ENCODE measurements at regions of chr1 and their contacts with region 1.

Region 1: DNA sequence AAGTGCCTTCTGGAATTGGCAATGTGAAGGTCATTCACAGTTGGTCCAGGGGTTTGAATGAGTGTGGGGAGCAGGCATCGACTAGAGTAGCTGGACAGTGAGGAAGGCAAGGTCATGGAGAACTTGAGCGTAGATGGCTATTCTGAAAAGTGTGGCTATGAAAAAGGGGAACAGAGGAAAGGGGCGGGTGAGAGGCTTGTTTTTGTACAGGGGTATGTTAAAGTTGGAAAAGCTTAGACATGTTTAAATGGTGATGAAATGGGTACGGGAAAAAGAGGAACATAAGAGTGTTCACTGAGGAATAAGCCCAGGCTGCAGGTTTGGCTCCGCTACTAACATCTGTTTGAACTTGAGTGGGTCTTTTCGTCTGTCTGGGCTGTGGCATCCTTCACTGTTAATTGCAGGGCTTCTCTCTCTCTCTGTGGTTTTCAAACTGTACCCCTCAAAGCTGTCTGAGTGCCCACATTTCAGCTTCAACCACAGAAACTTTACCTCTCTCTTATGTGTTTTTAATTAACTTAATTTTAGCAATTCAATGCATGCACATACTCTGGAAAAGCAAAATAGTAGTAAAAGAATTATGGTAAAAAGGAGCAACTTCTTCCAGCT is 70.8 kb upstream of the COA6 start:
- DNase-seq: no peak
- ATAC-seq: no peak
- H3K4me3 ChIP-seq: no peak overlapping the region
- H3K27ac ChIP-seq: no peak overlapping the region
- H3K4me1 ChIP-seq: no peaks in the 10 kb centered on the region
- H3K27me3 ChIP-seq: no peaks in the 10 kb centered on the region
- CTCF ChIP-seq: no peak

Region 2: DNA sequence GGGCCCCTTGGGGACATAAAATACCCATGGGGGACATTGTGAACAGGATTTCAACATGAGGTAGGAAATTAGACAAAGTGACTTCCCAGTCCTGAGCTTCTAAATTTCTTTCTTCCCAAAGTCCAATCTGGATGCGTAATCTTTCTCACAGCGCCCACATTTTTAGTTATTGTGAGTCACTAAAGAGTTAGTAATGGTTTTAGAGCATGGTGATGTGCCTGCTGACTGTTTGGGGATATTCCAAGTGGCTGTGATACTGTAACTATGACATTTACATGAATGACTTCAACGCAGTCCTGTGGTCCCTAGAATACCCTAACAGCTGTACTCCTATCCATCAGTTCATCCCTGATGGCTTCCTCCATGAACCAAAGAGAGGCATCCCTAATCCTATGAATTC is 153.2 kb before region 1 on chr1:
- CTCF ChIA-PET with region 1: interaction called, 16 read pairs
- POLR2A ChIA-PET with region 1: no interaction called
- in situ Hi-C with region 1: no loop called
- intact Hi-C with region 1: loop called (anchors 5 kb)
- DNase-seq: no peak
- ATAC-seq: no peak
- H3K4me3 ChIP-seq: no peak overlapping the region
- H3K27ac ChIP-seq: no peak overlapping the region
- H3K4me1 ChIP-seq: no peaks in the 10 kb centered on the region
- H3K27me3 ChIP-seq: no peaks in the 10 kb centered on the region
- CTCF ChIP-seq: no peak

Measured in Panc1 (cell line).